ENCODE measurements at regions of chr21 and their contacts with region 1.

Region 1: GRCh38 chr21:16308269-16308668 is 578.5 kb downstream of the USP25 start:
- DNase-seq: no peak
- H3K4me3 ChIP-seq: peak overlapping the region; percentile 25
- H3K27ac ChIP-seq: peak overlapping the region; percentile 73 to 74
- H3K4me1 ChIP-seq: peaks cover 2% of the 10 kb centered on the region
- H3K27me3 ChIP-seq: no peaks in the 10 kb centered on the region
- CTCF ChIP-seq: no peak
- EP300 ChIP-seq: no peak
- POLR2A ChIP-seq: no peak

Region 2: GRCh38 chr21:16181024-16181423 is 127.2 kb before region 1 on chr21:
- intact Hi-C with region 1: no loop called
- DNase-seq: peak in 1 of 5 donors; percentile 67
- H3K4me3 ChIP-seq: peak overlapping the region; percentile 25
- H3K27ac ChIP-seq: peak overlapping the region in 1 of 2 donors; percentile 76
- H3K4me1 ChIP-seq: peaks cover 5% of the 10 kb centered on the region
- H3K27me3 ChIP-seq: no peaks in the 10 kb centered on the region
- CTCF ChIP-seq: no peak
- EP300 ChIP-seq: no peak
- POLR2A ChIP-seq: no peak

Region 3: DNA sequence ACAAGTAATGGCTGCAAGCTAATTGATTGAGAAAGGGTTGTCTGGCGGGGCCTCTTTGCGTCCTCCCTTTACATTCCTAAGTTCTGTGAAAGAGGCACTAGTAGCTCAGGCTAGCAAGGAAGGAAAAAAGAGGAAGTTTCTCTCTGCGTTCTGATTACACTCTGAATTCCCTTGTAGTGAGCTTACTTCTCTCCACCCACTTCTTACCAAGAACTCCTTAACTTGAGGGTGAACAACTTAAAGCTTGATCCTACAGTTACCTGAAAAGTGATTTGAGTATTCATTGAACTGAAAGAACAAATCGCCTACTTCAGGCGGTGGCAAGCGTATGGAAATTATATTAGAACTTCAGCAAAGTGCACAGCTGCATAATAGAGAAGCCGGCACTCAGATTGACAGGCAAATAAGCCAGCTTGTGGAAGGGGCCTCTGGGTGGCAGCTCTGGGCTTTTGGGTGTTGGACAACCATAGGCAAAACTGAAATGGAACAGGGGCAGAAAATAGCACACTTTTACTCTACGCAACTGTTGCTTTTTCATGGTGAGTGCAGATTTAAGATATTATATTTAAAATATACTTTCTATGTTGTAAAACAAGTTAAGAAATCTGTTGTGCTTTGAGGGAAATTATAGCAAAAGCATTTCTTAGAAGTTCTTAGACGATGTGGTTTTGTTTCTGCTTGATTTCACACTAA is 114.0 kb before region 1 on chr21:
- intact Hi-C with region 1: loop called in 1 of 4 experiments (anchors 10 kb)
- DNase-seq: peak; percentile 59 to 71 (median 67)
- H3K4me3 ChIP-seq: peak overlapping the region; percentile 46
- H3K27ac ChIP-seq: peak overlapping the region; percentile 35 to 84
- H3K4me1 ChIP-seq: no peaks in the 10 kb centered on the region
- H3K27me3 ChIP-seq: no peaks in the 10 kb centered on the region
- CTCF ChIP-seq: no peak
- EP300 ChIP-seq: no peak
- POLR2A ChIP-seq: peak; percentile 9